CD4-positive, alpha-beta memory T cell (primary cell): ENCODE measurements at regions of chr19 and their contacts with region 1.

Region 1: DNA sequence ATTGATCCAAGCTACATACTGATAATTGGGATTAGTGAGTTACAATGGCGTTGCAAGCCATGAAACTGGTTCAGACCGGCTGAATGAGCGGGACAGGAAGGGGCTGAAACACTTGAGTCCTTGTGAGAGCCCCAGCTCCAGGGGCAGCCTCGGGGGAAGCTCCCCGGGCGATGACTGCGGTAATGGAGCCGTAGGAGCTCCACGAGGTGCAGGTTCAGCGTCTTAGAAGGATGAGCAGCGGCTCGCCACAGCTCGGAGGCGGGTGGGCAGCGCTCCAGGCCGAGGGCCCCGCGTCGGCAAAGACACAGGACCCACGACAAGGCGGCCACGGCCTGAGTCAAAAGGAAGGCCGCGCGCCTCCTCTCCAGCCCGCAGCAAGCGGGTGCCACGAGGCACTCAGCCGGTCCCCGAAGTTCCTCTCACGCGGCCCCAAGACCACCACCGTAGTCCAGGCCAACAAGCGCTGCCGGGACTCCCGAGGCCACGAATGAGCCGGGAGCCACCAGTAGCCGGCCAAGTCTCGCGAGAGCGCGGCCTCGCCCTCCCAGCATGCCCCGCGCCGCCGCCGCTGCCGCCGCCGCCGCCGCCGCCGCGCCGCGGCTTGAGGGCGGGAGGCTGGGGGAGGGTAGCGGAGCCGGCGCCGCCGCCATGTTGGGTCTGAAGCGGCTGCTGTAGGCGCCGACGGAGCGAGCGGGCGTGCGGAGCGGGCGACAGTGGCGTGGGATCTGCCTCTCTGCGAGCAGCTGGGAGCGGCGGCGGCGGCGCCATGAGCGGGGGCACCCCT is at the start of gene LSM14A:
- DNase-seq: peak; percentile 92 to 97 (median 95)
- H3K4me3 ChIP-seq: peak within 1 kb of the TSS; percentile 92
- H3K4me3 Mint-ChIP-seq: peak within 1 kb of the TSS; percentile 95 to 99 (median 98)
- H3K27ac ChIP-seq: peak within 1 kb of the TSS; percentile 95
- H3K27ac Mint-ChIP-seq: peak within 1 kb of the TSS; percentile 95 to 99 (median 98)
- H3K4me1 ChIP-seq: peaks cover 49% of the 10 kb centered on the region
- H3K4me1 Mint-ChIP-seq: peaks cover 25 to 52% (median 38%) of the 10 kb centered on the region in 4 donors
- H3K27me3 ChIP-seq: no peaks in the 10 kb centered on the region
- H3K27me3 Mint-ChIP-seq: no peaks in the 10 kb centered on the region
- total RNA-seq, gene LSM14A: 158 to 168 TPM

Region 2: DNA sequence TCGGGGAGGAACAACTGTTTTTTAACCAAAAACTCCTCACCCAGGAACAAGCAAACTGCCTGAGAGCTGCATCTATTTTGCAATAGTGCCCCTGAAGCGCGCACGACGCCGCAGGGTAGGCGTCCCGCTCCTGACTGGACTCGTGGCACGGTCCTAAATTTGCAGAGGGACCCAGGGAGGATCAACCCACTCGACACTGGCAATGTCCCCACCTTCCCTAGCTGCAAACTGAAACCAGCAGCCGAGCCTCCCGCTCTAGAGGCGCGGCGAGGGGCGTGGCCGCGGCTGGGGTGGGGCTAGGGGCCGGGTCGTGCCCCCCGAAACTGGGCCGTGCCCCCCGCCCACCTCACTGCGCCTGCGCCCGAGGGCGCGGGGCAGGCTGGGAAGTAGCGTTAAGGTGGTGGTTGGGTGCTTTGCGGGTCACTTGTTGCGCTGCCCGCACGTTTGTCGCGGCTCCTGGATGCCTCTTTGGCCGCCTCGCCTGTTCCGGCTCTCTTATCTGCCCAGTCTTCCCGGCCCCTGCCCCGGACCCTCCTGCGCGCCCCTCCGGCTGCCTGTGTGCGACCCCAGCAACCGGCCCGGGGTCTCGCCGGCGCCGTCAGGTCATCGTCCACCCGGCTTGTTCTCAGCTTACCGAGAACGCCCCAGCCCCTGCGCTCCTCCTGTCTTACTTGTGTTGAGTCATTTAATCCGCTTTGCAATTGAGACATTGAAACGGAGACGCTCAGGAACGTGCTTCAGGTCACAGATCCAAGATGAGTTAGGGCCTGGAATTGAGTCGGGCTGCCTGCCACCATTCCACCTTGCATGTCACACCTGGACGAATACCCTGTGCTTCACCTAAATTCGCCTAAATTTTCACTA is 37.6 kb before region 1 on chr19:
- CTCF ChIA-PET with region 1: no interaction called
- POLR2A ChIA-PET with region 1: interaction called, 10 read pairs
- intact Hi-C with region 1: loop called (anchors 1 kb)
- DNase-seq: peak; percentile 76 to 87 (median 84)
- H3K4me3 ChIP-seq: peak overlapping the region; percentile 78 to 86
- H3K4me3 Mint-ChIP-seq: peak overlapping the region; percentile 92 to 99 (median 94)
- H3K27ac ChIP-seq: peak overlapping the region; percentile 79
- H3K27ac Mint-ChIP-seq: peak overlapping the region; percentile 77 to 93 (median 91)
- H3K4me1 ChIP-seq: peaks cover 5% of the 10 kb centered on the region
- H3K4me1 Mint-ChIP-seq: peaks cover 0 to 11% (median 5%) of the 10 kb centered on the region in 4 donors
- H3K27me3 ChIP-seq: no peaks in the 10 kb centered on the region
- H3K27me3 Mint-ChIP-seq: no peaks in the 10 kb centered on the region

Region 3: DNA sequence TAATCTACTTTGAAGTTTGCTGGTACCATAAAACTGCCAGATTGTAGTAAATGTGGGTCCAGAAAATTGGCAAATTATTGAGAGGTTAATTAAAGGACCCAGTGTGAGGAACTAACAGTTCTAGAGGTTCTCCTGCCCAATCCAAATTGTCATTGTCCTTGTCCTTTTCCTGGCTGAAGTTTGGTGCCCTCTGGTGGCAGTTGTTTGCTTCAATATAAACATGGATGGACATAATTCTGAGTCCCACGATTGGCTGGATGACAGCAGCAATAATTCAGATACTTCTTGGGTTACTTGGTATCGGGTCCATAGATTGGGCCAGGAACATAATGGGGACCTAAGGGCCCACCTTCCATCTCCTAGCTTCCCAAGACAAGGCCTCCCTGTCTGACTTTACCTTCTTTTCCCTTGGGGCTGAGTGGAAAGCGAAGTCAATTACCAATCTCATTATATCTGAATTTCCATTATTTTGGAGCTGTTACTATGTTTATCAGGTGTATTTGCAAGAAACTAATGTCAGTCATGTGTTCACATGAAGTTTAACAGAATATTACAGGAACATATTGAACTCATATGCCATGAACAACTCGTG is 48.5 kb after region 1 on chr19:
- CTCF ChIA-PET with region 1: interaction called, 6 read pairs
- POLR2A ChIA-PET with region 1: interaction called, 29 read pairs
- intact Hi-C with region 1: loop called (anchors 1 kb)
- DNase-seq: peak; percentile 39 to 57 (median 52)
- H3K4me3 ChIP-seq: no peak overlapping the region
- H3K4me3 Mint-ChIP-seq: peak overlapping the region in 1 of 8 donors; percentile 44
- H3K27ac ChIP-seq: no peak overlapping the region
- H3K27ac Mint-ChIP-seq: peak overlapping the region in 6 of 7 donors; percentile 0 to 83 (median 39)
- H3K4me1 ChIP-seq: peaks cover 42% of the 10 kb centered on the region
- H3K4me1 Mint-ChIP-seq: peaks cover 45 to 68% (median 53%) of the 10 kb centered on the region in 4 donors
- H3K27me3 ChIP-seq: no peaks in the 10 kb centered on the region
- H3K27me3 Mint-ChIP-seq: no peaks in the 10 kb centered on the region

Region 4: GRCh38 chr19:34269968-34270621 is 98.0 kb after region 1 on chr19:
- CTCF ChIA-PET with region 1: no interaction called
- POLR2A ChIA-PET with region 1: interaction called, 17 read pairs
- intact Hi-C with region 1: no loop called
- DNase-seq: peak; percentile 87 to 93 (median 89)
- H3K4me3 ChIP-seq: peak overlapping the region; percentile 18 to 43
- H3K4me3 Mint-ChIP-seq: peak overlapping the region; percentile 68 to 87 (median 82)
- H3K27ac ChIP-seq: peak overlapping the region; percentile 68
- H3K27ac Mint-ChIP-seq: peak overlapping the region; percentile 90 to 99 (median 98)
- H3K4me1 ChIP-seq: peaks cover 95% of the 10 kb centered on the region
- H3K4me1 Mint-ChIP-seq: peaks cover 52 to 83% (median 74%) of the 10 kb centered on the region in 4 donors
- H3K27me3 ChIP-seq: no peaks in the 10 kb centered on the region
- H3K27me3 Mint-ChIP-seq: no peaks in the 10 kb centered on the region

Region 5: DNA sequence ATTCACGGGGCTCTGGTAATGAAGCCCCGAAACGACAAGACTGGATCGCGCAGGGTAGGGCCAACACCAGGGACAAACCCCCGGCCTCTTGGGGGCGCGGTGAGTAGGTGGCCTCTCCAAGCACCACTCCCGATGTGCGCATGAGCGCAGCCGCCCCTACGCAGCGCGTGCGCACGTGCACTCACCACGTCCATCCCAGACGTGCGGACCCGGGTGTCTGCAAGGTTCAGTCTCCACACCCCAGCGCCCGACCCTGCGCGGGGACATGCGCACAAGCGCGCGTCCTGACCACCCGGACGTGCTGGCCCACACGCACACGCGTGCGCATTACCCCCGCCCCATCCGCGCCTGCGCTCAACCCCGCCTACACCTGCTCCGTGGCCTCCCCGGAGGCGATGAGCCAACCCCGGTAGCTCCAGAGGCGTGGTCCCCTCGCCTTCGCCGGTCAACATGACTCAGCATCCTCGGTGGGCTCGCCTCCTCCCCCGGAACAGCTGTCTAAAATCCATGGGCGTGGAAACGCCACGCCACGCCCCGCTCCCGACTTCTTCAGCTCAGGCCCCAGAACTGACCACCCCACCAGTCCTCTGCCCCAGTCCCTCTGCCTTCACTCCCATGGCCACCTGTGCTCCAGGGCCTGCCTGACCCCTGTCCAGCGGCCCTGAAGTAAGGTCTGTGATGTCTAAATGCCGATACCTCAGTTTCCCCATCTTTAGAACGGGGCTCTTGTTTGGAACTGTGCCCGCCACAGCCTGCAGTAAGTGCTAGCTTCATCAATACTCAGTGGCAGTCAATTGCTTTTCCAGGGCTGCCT is 187.3 kb after region 1 on chr19:
- CTCF ChIA-PET with region 1: no interaction called
- POLR2A ChIA-PET with region 1: interaction called, 13 read pairs
- intact Hi-C with region 1: no loop called
- DNase-seq: peak; percentile 90 to 94 (median 92)
- H3K4me3 ChIP-seq: peak overlapping the region; percentile 52 to 86
- H3K4me3 Mint-ChIP-seq: peak overlapping the region; percentile 82 to 95 (median 90)
- H3K27ac ChIP-seq: peak overlapping the region; percentile 56
- H3K27ac Mint-ChIP-seq: peak overlapping the region; percentile 89 to 97 (median 95)
- H3K4me1 ChIP-seq: peaks cover 20% of the 10 kb centered on the region
- H3K4me1 Mint-ChIP-seq: peaks cover 15 to 35% (median 26%) of the 10 kb centered on the region in 4 donors
- H3K27me3 ChIP-seq: no peaks in the 10 kb centered on the region
- H3K27me3 Mint-ChIP-seq: no peaks in the 10 kb centered on the region

Region 6: DNA sequence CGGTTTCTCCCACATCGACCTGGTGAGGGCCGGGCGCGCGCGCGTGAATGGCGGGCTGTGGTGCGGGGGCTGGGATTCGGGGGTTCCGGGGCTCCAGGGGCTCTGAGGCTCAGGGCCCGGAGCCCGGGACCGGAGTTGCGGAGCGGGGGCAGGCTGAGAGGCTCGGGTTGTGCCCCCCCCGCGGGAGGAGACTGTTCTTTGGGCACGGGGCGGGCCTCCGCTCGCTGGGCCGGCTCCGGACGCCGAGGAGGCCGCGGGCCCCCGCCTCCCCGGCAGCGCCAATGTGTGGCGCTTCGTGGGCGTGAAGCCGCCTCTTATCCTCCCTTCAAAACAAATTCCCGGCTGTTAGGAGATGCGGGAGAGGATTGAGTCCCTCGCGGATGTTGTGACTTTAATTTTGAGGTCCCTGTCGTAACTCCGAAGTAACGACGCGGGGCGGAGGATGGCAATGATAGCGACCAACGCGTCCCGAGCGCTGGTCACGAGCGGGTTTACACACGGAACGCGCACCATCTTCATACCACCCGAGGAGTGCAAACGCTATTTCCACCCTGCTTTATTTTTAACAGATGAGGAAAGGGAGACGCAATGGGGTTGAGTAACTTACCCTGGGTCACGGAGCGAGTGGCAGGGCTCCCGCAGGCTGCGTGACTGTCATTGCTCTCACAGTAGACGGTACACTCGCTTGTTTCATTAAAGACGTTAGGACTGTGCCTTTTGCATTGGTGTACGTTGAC is 256.6 kb after region 1 on chr19:
- CTCF ChIA-PET with region 1: no interaction called
- POLR2A ChIA-PET with region 1: interaction called, 4 read pairs
- intact Hi-C with region 1: loop called (anchors 10 kb)
- DNase-seq: peak in 1 of 5 donors; percentile 23
- H3K4me3 ChIP-seq: peak overlapping the region; percentile 72 to 84
- H3K4me3 Mint-ChIP-seq: peak overlapping the region; percentile 96 to 98 (median 97)
- H3K27ac ChIP-seq: peak overlapping the region; percentile 93
- H3K27ac Mint-ChIP-seq: peak overlapping the region; percentile 93 to 98 (median 96)
- H3K4me1 ChIP-seq: peaks cover 38% of the 10 kb centered on the region
- H3K4me1 Mint-ChIP-seq: peaks cover 20 to 42% (median 31%) of the 10 kb centered on the region in 4 donors
- H3K27me3 ChIP-seq: no peaks in the 10 kb centered on the region
- H3K27me3 Mint-ChIP-seq: no peaks in the 10 kb centered on the region